ENCODE measurements at regions of chr4 and their contacts with region 1.

Region 1: DNA sequence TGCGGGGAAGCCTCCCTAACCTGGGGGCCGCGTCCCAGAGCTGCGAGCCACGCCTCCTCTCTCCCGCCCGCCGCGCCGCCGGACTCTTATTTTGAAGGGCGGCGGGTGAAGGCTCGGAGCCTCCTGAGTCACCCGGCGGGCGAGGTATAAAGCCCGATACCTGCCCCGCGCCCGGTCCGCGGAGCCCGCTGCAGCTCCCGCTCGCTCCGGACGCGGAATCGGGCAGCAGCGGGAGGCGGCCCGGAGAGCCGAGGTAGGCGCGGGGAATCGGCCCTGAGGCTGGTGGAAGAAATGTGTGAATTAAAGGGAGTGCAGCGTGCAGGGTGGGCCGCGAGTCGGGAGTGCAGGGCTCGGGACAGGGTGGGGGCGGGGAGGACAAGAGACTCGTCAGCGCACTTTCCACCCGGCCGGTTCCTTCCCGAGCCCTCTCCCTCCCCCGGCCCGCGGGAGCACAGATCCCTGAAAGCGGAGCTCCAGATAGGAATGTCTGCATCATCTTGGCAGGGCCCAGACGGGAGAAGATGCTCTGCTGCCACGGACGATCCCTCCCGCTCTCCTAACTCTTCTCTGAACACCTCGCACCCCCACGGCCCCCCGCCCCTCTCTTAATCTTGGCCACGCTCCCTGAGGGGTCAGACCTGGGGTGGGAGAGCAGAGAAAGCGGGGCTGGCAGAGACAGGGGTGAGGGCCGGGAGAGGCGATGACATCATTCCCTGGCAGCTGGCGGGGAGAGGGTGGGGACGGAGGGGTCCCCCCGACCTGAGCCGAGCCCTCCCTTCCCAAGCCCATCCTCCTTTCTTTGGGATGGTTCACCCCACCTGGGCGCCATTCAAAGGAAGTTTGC is 177.9 kb downstream of the CBR4 start:
- DNase-seq: peak in 8 of 9 experiments; percentile 26 to 70 (median 45)
- ATAC-seq: peak; percentile 85
- H3K4me3 ChIP-seq: peak overlapping the region; percentile 59 to 63
- H3K4me3 Mint-ChIP-seq: peak overlapping the region; percentile 84
- H3K27ac ChIP-seq: no peak overlapping the region
- H3K27ac Mint-ChIP-seq: no peak overlapping the region
- H3K4me1 ChIP-seq: peaks cover 11% of the 10 kb centered on the region
- H3K4me1 Mint-ChIP-seq: peaks cover 18% of the 10 kb centered on the region
- H3K27me3 ChIP-seq: peaks cover 14 to 16% of the 10 kb centered on the region in 2 experiments
- H3K27me3 Mint-ChIP-seq: peaks cover 55% of the 10 kb centered on the region
- CTCF ChIP-seq: no peak

Region 2: GRCh38 chr4:167234316-167234881 is 1597.7 kb before region 1 on chr4 and contains the start of gene SPOCK3:
- CTCF ChIA-PET with region 1: no interaction called
- POLR2A ChIA-PET with region 1: no interaction called
- intact Hi-C with region 1: no loop called
- DNase-seq: peak in 1 of 9 experiments; percentile 3
- ATAC-seq: no peak
- H3K4me3 ChIP-seq: no peak within 1 kb of the TSS
- H3K4me3 Mint-ChIP-seq: peak within 1 kb of the TSS; percentile 42
- H3K27ac ChIP-seq: no peak within 1 kb of the TSS
- H3K27ac Mint-ChIP-seq: no peak within 1 kb of the TSS
- H3K4me1 ChIP-seq: no peaks in the 10 kb centered on the region
- H3K4me1 Mint-ChIP-seq: no peaks in the 10 kb centered on the region
- H3K27me3 ChIP-seq: peaks cover 0 to 4% of the 10 kb centered on the region in 2 experiments
- H3K27me3 Mint-ChIP-seq: peaks cover 13% of the 10 kb centered on the region
- CTCF ChIP-seq: no peak
- total RNA-seq, gene SPOCK3: not detected

Region 3: DNA sequence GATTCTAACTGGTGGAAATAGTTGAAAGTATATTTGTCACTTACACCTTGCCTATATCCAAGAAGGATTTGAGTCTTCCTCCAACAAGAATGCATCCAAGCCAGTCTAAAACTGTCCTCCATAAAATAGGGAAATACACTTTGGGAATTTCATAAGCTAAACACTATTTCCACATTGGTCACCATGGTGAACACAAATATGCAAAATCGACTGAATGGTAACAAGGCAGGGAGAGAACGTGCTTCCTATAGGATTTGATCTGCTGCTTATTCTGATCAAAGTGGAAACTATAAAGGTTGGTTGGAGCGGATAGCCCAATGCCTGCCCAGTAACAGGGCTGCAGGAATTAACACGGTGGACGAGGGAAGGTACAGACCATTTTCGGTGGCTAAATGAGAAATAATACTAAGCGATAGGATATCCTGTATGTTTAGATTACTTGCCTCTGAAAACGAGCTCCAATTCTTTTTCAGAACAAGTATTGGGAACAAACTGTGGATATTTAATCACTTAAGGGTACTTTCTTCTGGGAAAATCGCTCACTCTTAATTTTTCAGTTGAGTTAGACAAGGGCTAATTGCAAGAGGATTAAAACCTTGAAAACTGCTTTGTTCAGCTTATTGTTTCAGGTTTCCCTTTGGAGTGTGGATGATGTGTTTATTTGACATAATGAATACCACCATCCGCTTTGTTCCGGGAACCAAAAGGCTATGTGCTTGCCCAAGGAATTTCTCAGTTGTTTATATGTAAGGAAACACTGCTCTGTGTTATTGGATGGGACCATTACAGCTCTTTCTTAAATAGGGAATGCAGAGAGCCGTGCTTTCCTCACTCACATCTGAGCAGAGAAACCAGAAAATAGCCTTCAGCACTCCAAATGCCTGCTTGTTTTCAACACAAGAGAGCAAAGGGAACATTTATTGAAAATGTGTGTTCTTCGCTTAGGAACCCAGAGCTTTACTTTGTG is 16.5 kb before region 1 on chr4:
- CTCF ChIA-PET with region 1: no interaction called
- POLR2A ChIA-PET with region 1: interaction called, 3 read pairs
- intact Hi-C with region 1: loop called in 1 of 2 experiments (anchors 2 kb)
- DNase-seq: no peak
- ATAC-seq: no peak
- H3K4me3 ChIP-seq: no peak overlapping the region
- H3K4me3 Mint-ChIP-seq: no peak overlapping the region
- H3K27ac ChIP-seq: no peak overlapping the region
- H3K27ac Mint-ChIP-seq: no peak overlapping the region
- H3K4me1 ChIP-seq: no peaks in the 10 kb centered on the region
- H3K4me1 Mint-ChIP-seq: peaks cover 7% of the 10 kb centered on the region
- H3K27me3 ChIP-seq: peaks cover 0 to 2% of the 10 kb centered on the region in 2 experiments
- H3K27me3 Mint-ChIP-seq: peaks cover 33% of the 10 kb centered on the region
- CTCF ChIP-seq: no peak